Gastrocnemius medialis (tissue), 4 donors: ENCODE measurements at regions of chr2 and their contacts with region 1.

Region 1: GRCh38 chr2:168956392-168956791 is 55.3 kb downstream of the G6PC2 start:
- DNase-seq: no peak
- ATAC-seq: no peak
- H3K4me3 ChIP-seq: no peak overlapping the region
- H3K27ac ChIP-seq: no peak overlapping the region
- H3K4me1 ChIP-seq: no peaks in the 10 kb centered on the region
- H3K27me3 ChIP-seq: no peaks in the 10 kb centered on the region
- CTCF ChIP-seq: no peak
- POLR2A ChIP-seq: no peak

Region 2: DNA sequence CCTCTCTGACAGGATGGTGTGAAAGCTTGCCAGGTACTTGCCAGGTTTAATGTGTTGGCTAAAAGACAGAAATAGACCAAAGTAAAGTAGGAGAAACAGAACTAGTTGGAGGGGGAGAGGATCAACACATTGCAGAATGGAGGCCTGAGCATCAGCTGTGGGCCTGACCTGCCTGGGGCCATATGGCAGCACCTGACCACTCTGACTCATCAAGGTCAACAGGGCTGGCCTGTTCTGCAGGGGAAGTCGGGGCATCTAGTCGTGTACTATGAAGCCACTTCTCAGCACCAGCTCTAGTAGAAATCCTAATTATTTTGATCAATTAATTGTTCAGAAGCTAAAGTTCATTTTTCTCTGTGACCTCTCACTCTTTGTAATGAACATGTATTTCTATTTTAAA is 189.8 kb before region 1 on chr2:
- in situ Hi-C with region 1: no loop called
- intact Hi-C with region 1: no loop called
- DNase-seq: no peak
- ATAC-seq: no peak
- H3K4me3 ChIP-seq: no peak overlapping the region
- H3K27ac ChIP-seq: no peak overlapping the region
- H3K4me1 ChIP-seq: no peaks in the 10 kb centered on the region
- H3K27me3 ChIP-seq: no peaks in the 10 kb centered on the region
- CTCF ChIP-seq: no peak
- POLR2A ChIP-seq: no peak

Region 3: GRCh38 chr2:168935810-168936581 is 20.4 kb before region 1 on chr2:
- in situ Hi-C with region 1: no loop called
- intact Hi-C with region 1: no loop called
- DNase-seq: no peak
- ATAC-seq: no peak
- H3K4me3 ChIP-seq: no peak overlapping the region
- H3K27ac ChIP-seq: no peak overlapping the region
- H3K4me1 ChIP-seq: no peaks in the 10 kb centered on the region
- H3K27me3 ChIP-seq: no peaks in the 10 kb centered on the region
- CTCF ChIP-seq: no peak
- POLR2A ChIP-seq: no peak

Region 4: GRCh38 chr2:169131587-169132512 is 175.5 kb after region 1 on chr2:
- in situ Hi-C with region 1: loop called in 2 of 4 experiments (anchors 10 to 25 kb)
- intact Hi-C with region 1: loop called (anchors 2 kb)
- DNase-seq: no peak
- ATAC-seq: peak; percentile 39 to 46
- H3K4me3 ChIP-seq: no peak overlapping the region
- H3K27ac ChIP-seq: no peak overlapping the region
- H3K4me1 ChIP-seq: no peaks in the 10 kb centered on the region
- H3K27me3 ChIP-seq: no peaks in the 10 kb centered on the region
- CTCF ChIP-seq: peak in 4 of 5 experiments; percentile 61 to 78 (median 70)
- POLR2A ChIP-seq: no peak